ENCODE measurements at regions of chr9 and their contacts with region 1.

Region 1: DNA sequence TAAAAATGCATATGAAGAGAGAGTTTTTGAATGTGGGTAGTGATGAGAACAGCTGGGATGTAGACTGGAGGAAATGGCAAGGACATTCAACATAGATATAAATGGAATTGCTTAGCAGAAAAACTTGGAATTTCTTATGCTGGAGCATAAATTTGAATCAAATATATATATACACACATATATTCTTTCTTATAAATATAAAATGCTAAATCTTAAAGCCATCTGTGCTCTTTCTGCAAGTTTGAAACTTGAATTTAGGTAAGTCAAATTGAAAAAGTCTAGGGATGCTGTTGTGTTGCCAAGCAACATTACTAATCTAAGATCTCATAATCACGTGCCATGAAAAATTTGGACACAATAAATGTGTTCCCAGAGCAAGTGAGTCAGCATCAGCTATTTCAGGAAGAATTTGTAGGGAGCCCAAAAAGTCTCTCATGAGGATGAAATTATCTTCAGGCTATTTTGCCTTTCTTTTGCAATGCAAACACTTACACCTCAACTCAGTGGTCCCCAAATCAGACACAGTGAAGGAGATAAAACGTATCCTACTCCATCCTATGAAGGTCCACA is 58.4 kb upstream of the ALDH1A1 start:
- DNase-seq: no peak
- ATAC-seq: peak; percentile 83 to 87
- H3K4me3 ChIP-seq: no peak overlapping the region
- H3K27ac ChIP-seq: peak overlapping the region in 2 of 4 donors; percentile 28 to 59
- H3K4me1 ChIP-seq: peaks cover 0 to 5% of the 10 kb centered on the region in 2 donors
- H3K27me3 ChIP-seq: no peaks in the 10 kb centered on the region
- CTCF ChIP-seq: no peak
- POLR2A ChIP-seq: no peak

Region 2: DNA sequence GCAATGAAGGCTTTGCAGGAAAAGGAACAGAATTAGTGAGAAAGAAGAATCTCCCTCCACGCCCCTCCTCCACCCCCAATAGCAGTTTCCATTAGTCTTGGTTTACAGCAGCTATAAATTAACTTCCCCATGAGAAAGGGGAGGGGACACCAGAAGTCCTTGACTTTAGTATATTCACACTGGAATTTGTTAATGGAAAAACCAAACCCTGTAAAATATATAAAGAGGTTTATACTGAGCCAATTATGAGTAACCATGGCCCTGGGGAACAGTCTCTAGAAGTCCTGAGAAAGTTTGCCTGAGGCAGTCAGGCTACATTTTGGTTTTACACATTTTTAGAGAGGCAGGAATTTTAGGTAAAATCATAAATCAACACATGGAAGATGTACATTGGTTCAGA is 146.9 kb before region 1 on chr9:
- in situ Hi-C with region 1: loop called in 2 of 4 experiments (anchors 5 to 10 kb)
- intact Hi-C with region 1: no loop called
- DNase-seq: no peak
- ATAC-seq: no peak
- H3K4me3 ChIP-seq: no peak overlapping the region
- H3K27ac ChIP-seq: no peak overlapping the region
- H3K4me1 ChIP-seq: no peaks in the 10 kb centered on the region
- H3K27me3 ChIP-seq: no peaks in the 10 kb centered on the region
- CTCF ChIP-seq: no peak
- POLR2A ChIP-seq: no peak

Region 3: DNA sequence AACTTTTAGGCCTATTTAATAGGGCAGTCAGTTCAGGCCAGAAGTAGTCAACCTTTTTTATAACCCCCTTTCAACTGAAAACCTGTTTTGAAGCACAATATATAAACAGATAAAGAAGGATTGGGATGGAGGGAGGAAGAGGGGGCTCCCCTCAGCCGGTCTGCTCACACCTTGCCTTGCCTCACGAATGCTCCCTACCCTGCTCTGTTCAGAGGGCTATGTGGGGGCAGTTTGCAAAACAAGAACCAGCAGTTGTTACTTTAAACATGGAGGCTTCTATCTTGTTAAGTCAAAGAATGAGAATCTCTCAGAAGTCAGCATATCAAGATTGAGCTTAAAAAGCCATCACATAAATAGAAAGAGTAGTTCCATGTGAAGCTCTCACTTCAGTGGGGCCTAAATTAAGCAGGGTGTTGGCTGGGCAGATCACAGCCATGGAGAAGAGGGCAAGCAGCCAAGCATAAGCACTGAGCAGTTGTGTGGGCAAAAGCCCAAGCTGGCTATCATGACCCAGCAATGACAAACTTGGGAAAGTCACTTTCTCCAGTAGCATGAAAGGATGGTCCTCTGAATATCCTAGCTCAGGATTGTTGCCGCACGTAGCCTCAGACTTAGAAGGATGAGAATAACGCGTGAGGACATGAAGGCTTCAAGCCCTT is 129.0 kb before region 1 on chr9:
- in situ Hi-C with region 1: loop called in 1 of 4 experiments (anchors 10 kb)
- intact Hi-C with region 1: no loop called
- DNase-seq: peak; percentile 43 to 70
- ATAC-seq: peak; percentile 94 to 95
- H3K4me3 ChIP-seq: no peak overlapping the region
- H3K27ac ChIP-seq: peak overlapping the region; percentile 44 to 72 (median 58)
- H3K4me1 ChIP-seq: peaks cover 6 to 13% of the 10 kb centered on the region in 2 donors
- H3K27me3 ChIP-seq: no peaks in the 10 kb centered on the region
- CTCF ChIP-seq: no peak
- POLR2A ChIP-seq: no peak

Measured in gastrocnemius medialis (tissue), 4 donors.